ENCODE measurements at regions of chr1 and their contacts with region 1.

Region 1: DNA sequence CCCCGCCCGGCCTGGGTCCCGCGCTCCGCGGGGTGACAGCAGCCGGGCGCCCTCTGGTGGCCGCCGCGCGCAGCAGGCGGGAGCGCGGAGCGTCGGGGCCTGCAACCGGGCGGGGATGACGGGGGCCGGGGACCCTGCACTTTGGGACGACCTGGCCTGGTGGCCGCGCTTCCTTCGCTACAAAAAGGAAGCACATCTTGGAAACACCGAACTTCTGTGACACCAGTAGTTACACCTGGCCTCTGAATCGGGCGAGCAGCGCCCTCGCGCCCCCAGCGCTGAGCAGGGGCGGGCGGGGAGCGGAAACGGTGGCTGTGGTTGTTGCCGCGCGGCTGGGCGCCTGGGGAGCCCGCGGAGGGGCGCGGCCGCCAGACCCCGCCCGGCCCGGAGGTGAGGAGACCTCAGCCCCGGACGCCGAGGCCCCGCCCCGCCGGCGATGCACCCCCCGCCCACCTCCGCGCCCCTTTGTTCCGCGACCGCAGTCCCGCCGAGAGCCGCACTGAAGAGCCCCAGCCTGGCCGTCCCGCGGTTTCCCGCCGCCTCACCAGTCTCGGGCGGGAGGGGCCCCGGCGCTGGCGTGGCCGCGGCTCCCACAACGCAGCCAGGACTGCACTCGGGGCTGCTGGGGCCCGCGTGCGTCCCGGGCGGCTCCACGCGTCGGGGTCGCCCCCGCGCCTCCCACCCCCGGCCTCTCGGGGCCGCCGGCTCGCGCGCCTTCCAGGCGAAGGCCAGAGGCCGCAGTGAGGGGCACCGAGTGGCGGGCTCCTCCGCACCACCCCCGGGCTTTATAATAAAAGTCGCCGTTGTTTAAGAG is 59.3 kb downstream of the H3-3A start:
- DNase-seq: peak; percentile 71
- ATAC-seq: peak; percentile 74
- H3K4me3 Mint-ChIP-seq: peak overlapping the region; percentile 76
- H3K27ac Mint-ChIP-seq: peak overlapping the region; percentile 88
- H3K4me1 Mint-ChIP-seq: peaks cover 25% of the 10 kb centered on the region
- H3K27me3 Mint-ChIP-seq: no peaks in the 10 kb centered on the region
- CTCF ChIP-seq: peak; percentile 83

Region 2: GRCh38 chr1:226062558-226063223 is 59.1 kb before region 1 on chr1 and contains the start of gene H3-3A:
- CTCF ChIA-PET with region 1: interaction called, 64 read pairs
- POLR2A ChIA-PET with region 1: interaction called, 14 read pairs
- intact Hi-C with region 1: loop called (anchors 5 kb)
- DNase-seq: peak; percentile 99
- ATAC-seq: peak; percentile 85
- H3K4me3 Mint-ChIP-seq: peak within 1 kb of the TSS; percentile 97
- H3K27ac Mint-ChIP-seq: peak within 1 kb of the TSS; percentile 100
- H3K4me1 Mint-ChIP-seq: peaks cover 33% of the 10 kb centered on the region
- H3K27me3 Mint-ChIP-seq: no peaks in the 10 kb centered on the region
- CTCF ChIP-seq: no peak
- total RNA-seq, gene H3-3A: 287 to 308 TPM

Region 3: DNA sequence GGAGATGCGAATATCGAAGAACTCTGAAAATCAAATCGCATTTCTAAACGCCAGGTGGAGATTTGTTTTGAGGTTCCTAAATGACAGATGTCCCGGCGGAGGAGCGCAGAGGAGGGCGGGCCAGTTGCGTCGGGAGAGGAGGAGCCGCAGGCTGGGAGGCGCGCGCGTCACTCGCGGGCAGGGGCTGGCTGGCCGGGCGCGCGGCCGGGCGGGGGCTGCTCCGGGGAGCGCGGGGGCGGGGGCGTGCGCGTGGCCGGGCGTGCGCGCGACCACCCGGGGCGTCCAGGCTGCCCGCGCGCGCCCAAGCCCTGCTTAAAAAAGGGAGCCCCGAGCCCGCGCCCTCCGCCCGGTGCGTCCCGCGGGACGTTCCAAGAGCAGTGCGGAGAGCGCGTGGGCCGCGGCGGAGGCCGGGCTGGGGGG is 12.0 kb before region 1 on chr1:
- CTCF ChIA-PET with region 1: interaction called, 24 read pairs
- POLR2A ChIA-PET with region 1: interaction called, 37 read pairs
- intact Hi-C with region 1: no loop called
- DNase-seq: peak; percentile 87
- ATAC-seq: peak; percentile 86
- H3K4me3 Mint-ChIP-seq: peak overlapping the region; percentile 73
- H3K27ac Mint-ChIP-seq: peak overlapping the region; percentile 76
- H3K4me1 Mint-ChIP-seq: peaks cover 13% of the 10 kb centered on the region
- H3K27me3 Mint-ChIP-seq: no peaks in the 10 kb centered on the region
- CTCF ChIP-seq: no peak

Region 4: GRCh38 chr1:226162898-226163297 is 41.1 kb after region 1 on chr1:
- CTCF ChIA-PET with region 1: interaction called, 19 read pairs
- POLR2A ChIA-PET with region 1: no interaction called
- intact Hi-C with region 1: no loop called
- DNase-seq: no peak
- ATAC-seq: no peak
- H3K4me3 Mint-ChIP-seq: no peak overlapping the region
- H3K27ac Mint-ChIP-seq: no peak overlapping the region
- H3K4me1 Mint-ChIP-seq: no peaks in the 10 kb centered on the region
- H3K27me3 Mint-ChIP-seq: no peaks in the 10 kb centered on the region
- CTCF ChIP-seq: no peak

Region 5: DNA sequence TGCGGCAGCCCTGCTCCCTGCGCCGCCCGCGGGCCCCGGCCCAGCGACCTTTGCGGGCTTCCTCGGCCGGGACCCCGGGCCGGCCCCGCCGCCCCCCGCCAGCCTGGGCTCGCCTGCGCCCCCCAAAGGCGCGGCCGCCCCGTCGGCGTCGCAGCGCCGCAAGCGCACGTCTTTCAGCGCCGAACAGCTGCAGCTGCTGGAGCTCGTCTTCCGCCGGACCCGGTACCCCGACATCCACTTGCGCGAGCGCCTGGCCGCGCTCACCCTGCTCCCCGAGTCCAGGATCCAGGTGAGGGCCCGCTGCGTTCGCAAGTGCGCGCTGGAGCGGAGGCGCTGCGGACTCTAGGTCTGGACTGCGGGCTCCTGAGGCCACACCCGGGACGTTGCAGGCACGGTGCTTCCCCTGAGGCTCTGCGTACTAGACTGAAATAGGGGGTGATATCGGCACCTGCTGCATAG is 102.0 kb after region 1 on chr1:
- CTCF ChIA-PET with region 1: interaction called, 22 read pairs
- POLR2A ChIA-PET with region 1: interaction called, 4 read pairs
- intact Hi-C with region 1: no loop called
- DNase-seq: peak; percentile 44
- ATAC-seq: peak; percentile 69
- H3K4me3 Mint-ChIP-seq: peak overlapping the region; percentile 74
- H3K27ac Mint-ChIP-seq: no peak overlapping the region
- H3K4me1 Mint-ChIP-seq: peaks cover 12% of the 10 kb centered on the region
- H3K27me3 Mint-ChIP-seq: peaks cover 37% of the 10 kb centered on the region
- CTCF ChIP-seq: no peak

Measured in activated CD8-positive, alpha-beta T cell treated with anti-CD3 and anti-CD28 coated beads for 36 hours (primary cell).